Activated naive CD4-positive, alpha-beta T cell treated with anti-CD3 and anti-CD28 coated beads, Interleukin-2, amount 10 ng/mL, durations not matched to agents 7 days and 5 days (primary cell): ENCODE measurements at regions of chr1 and their contacts with region 1.

Region 1: GRCh38 chr1:2381741-2382620 is 9.4 kb downstream of the MORN1 start:
- DNase-seq: peak; percentile 87
- H3K4me3 Mint-ChIP-seq: no peak overlapping the region
- H3K27ac Mint-ChIP-seq: no peak overlapping the region
- H3K4me1 Mint-ChIP-seq: peaks cover 6% of the 10 kb centered on the region
- H3K27me3 Mint-ChIP-seq: no peaks in the 10 kb centered on the region

Region 2: GRCh38 chr1:2189459-2190425 is 192.2 kb before region 1 on chr1:
- CTCF ChIA-PET with region 1: interaction called, 217 read pairs
- DNase-seq: peak; percentile 94
- H3K4me3 Mint-ChIP-seq: peak overlapping the region; percentile 75
- H3K27ac Mint-ChIP-seq: peak overlapping the region; percentile 96
- H3K4me1 Mint-ChIP-seq: peaks cover 30% of the 10 kb centered on the region
- H3K27me3 Mint-ChIP-seq: no peaks in the 10 kb centered on the region

Region 3: GRCh38 chr1:2233997-2234761 is 147.8 kb before region 1 on chr1:
- CTCF ChIA-PET with region 1: interaction called, 11 read pairs
- DNase-seq: peak; percentile 86
- H3K4me3 Mint-ChIP-seq: peak overlapping the region; percentile 96
- H3K27ac Mint-ChIP-seq: peak overlapping the region; percentile 96
- H3K4me1 Mint-ChIP-seq: peaks cover 68% of the 10 kb centered on the region
- H3K27me3 Mint-ChIP-seq: no peaks in the 10 kb centered on the region

Region 4: GRCh38 chr1:2628191-2628932 is 246.4 kb after region 1 on chr1:
- CTCF ChIA-PET with region 1: no interaction called
- DNase-seq: peak; percentile 17
- H3K4me3 Mint-ChIP-seq: no peak overlapping the region
- H3K27ac Mint-ChIP-seq: no peak overlapping the region
- H3K4me1 Mint-ChIP-seq: peaks cover under 1% of the 10 kb centered on the region
- H3K27me3 Mint-ChIP-seq: peaks cover 75% of the 10 kb centered on the region